A549 (cell line): ENCODE measurements at regions of chr12 and their contacts with region 1.

Region 1: DNA sequence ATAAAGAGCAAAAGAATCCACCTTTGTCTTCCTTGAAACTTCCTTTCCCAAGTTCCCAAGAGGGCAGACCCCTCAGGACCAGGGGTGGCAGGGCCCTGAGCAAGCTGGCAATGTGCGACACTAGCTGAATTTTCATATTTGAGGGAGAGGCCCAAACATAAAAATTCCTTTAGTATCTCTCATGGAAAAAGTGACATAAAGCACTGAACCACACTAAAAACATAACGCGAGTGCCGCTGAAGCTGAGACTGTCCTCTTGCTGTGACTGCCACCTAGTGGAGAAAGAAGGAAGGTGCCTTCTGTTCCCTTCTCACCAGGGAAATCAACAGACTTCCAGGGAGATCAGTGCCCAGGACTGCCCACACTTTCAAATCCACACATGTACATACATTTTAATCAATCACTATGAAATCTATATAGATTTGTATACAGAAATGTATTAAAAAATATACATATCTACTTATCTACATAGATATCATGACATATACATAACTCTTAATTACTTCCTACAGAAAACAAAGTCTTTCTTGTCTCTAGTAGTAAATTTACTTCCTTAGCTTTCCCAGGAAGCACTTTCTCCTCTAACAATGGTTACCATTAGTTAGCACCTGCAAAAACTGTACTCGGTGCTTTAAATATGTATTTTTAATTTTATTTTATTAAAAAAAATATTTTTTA is 53.8 kb downstream of the SSH1 start:
- DNase-seq: peak; percentile 85 to 92
- ATAC-seq: peak; percentile 82 to 86
- H3K4me3 ChIP-seq: no peak overlapping the region
- H3K27ac ChIP-seq: peak overlapping the region; percentile 31 to 68; a peak in 4 of 6 replicates
- H3K4me1 ChIP-seq: peaks cover 6% of the 10 kb centered on the region
- CTCF ChIP-seq: peak; percentile 94
- EP300 ChIP-seq: no peak
- POLR2A ChIP-seq: no peak
- RAD21 ChIP-seq: peak; percentile 94 to 98

Region 2: DNA sequence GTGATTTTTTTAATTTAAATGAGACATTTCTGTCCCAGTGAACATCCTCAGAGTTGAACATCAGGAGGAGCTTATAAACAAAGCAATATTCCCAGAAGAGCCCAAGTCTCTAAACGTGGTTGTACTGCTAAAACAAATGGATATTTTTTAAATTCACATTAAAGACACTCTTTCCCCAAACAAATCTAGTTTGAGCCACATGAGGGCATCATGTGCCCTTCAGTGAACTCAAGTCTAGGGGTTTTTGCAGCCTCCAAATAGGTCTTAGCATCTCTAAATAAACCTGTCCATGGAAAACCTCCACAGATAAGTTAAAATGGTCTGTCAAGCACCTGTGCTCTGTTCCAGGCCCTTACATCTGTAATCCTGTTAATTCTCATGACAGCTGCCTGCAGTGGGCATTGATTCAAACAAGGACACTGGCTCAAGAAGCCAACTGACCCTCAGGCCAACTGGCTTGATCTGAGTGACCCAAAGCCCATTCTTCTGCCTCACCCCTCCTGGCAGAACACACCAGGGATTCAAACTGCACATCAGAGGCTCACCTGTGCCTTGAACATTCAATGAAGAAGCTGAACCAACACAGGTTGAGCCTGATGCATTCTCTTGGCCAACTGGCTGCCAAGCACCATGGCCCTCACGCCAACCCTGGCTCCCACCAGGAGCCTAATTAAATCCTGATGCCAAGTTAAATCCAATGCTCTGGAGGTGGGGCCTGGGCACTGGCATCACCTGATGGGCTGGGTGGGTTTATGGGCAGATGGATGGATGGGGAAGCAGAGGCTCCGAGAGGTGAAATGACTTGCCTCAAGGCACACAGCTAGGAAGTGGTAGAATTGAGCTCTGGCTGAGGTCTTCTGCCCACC is 232.6 kb before region 1 on chr12:
- CTCF ChIA-PET with region 1: interaction called, 20 read pairs
- POLR2A ChIA-PET with region 1: no interaction called
- DNase-seq: peak in 1 of 2 experiments; percentile 58
- ATAC-seq: peak; percentile 17 to 61; a peak in 5 of 6 replicates
- H3K4me3 ChIP-seq: no peak overlapping the region
- H3K27ac ChIP-seq: no peak overlapping the region
- H3K4me1 ChIP-seq: peaks cover 5% of the 10 kb centered on the region
- CTCF ChIP-seq: peak; percentile 53; the same call in 2 of the 3 replicates
- EP300 ChIP-seq: no peak
- POLR2A ChIP-seq: no peak
- RAD21 ChIP-seq: peak; percentile 65 to 74

Region 3: DNA sequence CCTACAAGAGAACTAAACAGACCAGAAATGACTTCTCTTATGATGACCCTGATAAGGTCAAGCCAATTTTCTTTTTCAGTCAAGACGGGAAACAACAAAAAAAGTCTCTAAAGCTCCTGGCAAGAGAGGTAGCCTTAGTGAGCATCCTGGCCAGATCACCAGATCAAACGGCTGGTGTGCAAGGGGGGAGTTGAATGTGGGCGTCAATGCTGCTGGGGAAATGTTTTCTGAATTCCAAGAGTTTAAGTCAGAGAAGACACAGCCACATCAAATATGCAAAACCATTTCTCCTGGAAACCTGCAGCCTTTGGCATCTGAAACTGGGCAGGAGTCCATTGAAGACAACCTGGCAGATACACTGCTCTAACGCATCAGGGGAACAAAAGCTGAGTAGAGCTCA is 153.9 kb before region 1 on chr12:
- CTCF ChIA-PET with region 1: interaction called, 12 read pairs
- POLR2A ChIA-PET with region 1: no interaction called
- DNase-seq: peak in 1 of 2 experiments; percentile 24
- ATAC-seq: peak; percentile 16 to 46; a peak in 3 of 6 replicates
- H3K4me3 ChIP-seq: no peak overlapping the region
- H3K27ac ChIP-seq: peak overlapping the region in 1 of 2 experiments; percentile 32; a peak in 1 of 6 replicates
- H3K4me1 ChIP-seq: peaks cover 29% of the 10 kb centered on the region
- CTCF ChIP-seq: no peak
- EP300 ChIP-seq: no peak
- POLR2A ChIP-seq: no peak
- RAD21 ChIP-seq: no peak

Region 4: DNA sequence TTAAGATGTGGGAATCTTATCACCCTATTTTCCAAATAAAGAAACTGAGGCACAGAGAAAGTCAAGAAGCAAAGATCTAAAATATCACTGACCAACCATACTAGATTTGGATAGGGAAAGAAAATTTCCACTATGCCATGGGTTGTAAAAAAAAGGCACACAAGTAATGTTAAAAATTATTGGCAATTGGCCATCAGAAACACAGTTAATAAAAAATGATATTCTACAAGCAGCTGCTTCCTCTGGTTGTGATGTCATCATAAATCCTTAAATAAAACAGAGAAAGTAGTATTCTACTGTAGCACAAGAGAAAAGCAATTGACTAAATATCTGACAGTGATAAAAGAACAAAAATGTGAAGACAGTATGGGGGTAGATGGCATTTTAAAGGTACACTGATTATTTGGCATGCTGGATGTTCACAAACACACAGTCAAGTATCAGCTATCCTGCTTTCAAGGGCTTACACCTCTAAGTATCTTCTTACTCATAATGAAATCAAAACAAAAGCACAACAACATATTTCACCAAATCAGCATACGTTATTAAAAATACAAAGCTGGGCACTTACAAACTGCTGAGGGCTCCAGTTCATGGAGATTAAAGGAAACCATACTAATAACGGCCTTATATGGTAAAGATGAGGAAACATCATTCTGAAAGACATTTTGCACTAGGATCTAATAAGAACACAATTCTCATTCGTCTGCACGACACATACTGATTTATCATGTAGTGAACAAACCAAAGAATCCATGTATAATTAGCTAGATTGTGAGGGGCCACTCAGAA is 117.9 kb before region 1 on chr12:
- CTCF ChIA-PET with region 1: interaction called, 31 read pairs
- POLR2A ChIA-PET with region 1: no interaction called
- DNase-seq: no peak
- ATAC-seq: peak in 1 of 2 experiments; percentile 11; a peak in 1 of 6 replicates
- H3K4me3 ChIP-seq: no peak overlapping the region
- H3K27ac ChIP-seq: peak overlapping the region; percentile 6 to 12; a peak in 3 of 6 replicates
- H3K4me1 ChIP-seq: peaks cover 66% of the 10 kb centered on the region
- CTCF ChIP-seq: no peak
- EP300 ChIP-seq: no peak
- POLR2A ChIP-seq: no peak
- RAD21 ChIP-seq: no peak

Region 5: DNA sequence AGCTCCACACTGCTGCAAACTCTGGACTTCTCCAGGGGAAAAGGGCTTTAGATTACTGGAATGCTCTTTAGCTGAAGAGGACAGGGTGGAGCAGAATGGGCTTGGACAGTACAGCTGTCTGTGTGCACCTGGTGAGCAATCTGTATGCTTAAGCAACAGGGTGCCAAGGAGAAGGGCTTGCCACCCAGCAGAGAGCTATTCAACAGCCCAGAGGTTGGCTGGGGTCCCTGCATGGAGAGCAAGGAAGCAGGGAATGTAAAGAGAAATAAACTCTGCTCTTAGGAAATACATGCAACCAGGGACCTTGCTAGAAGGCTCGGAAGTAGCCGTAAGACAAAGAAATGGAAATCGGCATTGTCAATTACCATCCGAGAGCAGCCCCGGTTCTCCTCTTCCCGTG is 19.3 kb before region 1 on chr12:
- CTCF ChIA-PET with region 1: interaction called, 65 read pairs
- POLR2A ChIA-PET with region 1: no interaction called
- DNase-seq: no peak
- ATAC-seq: peak; percentile 5 to 14; a peak in 2 of 6 replicates
- H3K4me3 ChIP-seq: no peak overlapping the region
- H3K27ac ChIP-seq: no peak overlapping the region
- H3K4me1 ChIP-seq: no peaks in the 10 kb centered on the region
- CTCF ChIP-seq: no peak
- EP300 ChIP-seq: no peak
- POLR2A ChIP-seq: no peak
- RAD21 ChIP-seq: no peak

Region 6: GRCh38 chr12:108833355-108833733 is 29.8 kb after region 1 on chr12:
- CTCF ChIA-PET with region 1: interaction called, 23 read pairs
- POLR2A ChIA-PET with region 1: no interaction called
- DNase-seq: peak; percentile 74 to 79
- ATAC-seq: peak; percentile 76 to 84
- H3K4me3 ChIP-seq: peak overlapping the region; percentile 9; the same call in 1 of the 3 replicates
- H3K27ac ChIP-seq: peak overlapping the region; percentile 69 to 72
- H3K4me1 ChIP-seq: peaks cover 68% of the 10 kb centered on the region
- CTCF ChIP-seq: no peak
- EP300 ChIP-seq: no peak
- POLR2A ChIP-seq: no peak
- RAD21 ChIP-seq: no peak

Region 7: GRCh38 chr12:108950991-108951739 is 147.6 kb after region 1 on chr12:
- CTCF ChIA-PET with region 1: interaction called, 18 read pairs
- POLR2A ChIA-PET with region 1: no interaction called
- DNase-seq: peak; percentile 39 to 75
- ATAC-seq: peak; percentile 49 to 87; a peak in 3 of 6 replicates
- H3K4me3 ChIP-seq: no peak overlapping the region
- H3K27ac ChIP-seq: 0 out of 6 replicates have a peak overlapping the region, but pooled peaks of 1 of the 2 experiments have one; percentile 36
- H3K4me1 ChIP-seq: no peaks in the 10 kb centered on the region
- CTCF ChIP-seq: peak; percentile 92
- EP300 ChIP-seq: no peak
- POLR2A ChIP-seq: no peak
- RAD21 ChIP-seq: peak; percentile 86 to 89